Activated naive CD4-positive, alpha-beta T cell treated with anti-CD3 and anti-CD28 coated beads for 36 hours (primary cell): ENCODE measurements at regions of chr10 and their contacts with region 1.

Region 1: GRCh38 chr10:75111367-75111906 is at the start of gene SAMD8:
- DNase-seq: peak; percentile 98
- H3K4me3 Mint-ChIP-seq: peak within 1 kb of the TSS; percentile 95
- H3K27ac Mint-ChIP-seq: peak within 1 kb of the TSS; percentile 97
- H3K4me1 Mint-ChIP-seq: peaks cover 44% of the 10 kb centered on the region
- H3K27me3 Mint-ChIP-seq: no peaks in the 10 kb centered on the region
- total RNA-seq, gene SAMD8: 15.3 to 16.9 TPM

Region 2: DNA sequence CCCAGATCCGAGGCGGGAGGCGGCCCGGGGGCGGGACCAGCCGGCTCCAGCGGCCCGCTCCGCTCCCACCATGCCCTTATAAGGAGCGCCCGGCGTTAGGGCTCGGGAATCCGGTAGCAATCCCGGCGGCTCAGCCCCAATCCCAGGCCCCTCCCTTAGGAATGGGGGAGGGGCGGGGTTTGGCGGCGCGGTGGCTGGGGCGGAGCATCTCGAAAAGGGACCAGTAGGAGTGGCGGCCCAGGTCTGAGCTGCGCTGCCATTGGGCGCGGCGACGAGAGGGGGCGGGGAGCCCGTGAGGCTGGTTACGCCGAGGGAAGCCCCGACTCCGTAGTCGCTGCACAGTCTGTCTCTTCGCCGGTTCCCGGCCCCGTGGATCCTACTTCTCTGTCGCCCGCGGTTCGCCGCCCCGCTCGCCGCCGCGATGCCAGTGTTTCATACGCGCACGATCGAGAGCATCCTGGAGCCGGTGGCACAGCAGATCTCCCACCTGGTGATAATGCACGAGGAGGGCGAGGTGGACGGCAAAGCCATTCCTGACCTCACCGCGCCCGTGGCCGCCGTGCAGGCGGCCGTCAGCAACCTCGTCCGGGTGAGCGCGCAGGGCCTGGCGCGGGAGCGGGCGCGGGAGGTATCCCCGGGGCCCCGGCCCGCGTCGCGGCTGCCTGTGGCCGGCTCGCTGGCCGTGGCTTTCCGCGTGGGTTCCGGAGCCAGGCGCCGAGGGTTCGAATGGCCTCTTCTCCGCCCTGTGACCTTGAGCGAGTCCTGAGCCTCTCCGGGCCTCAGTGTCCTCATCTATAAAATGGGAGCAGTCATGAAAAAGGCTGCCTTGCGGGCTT is 1113.4 kb before region 1 on chr10 and contains the start of gene VCL:
- CTCF ChIA-PET with region 1: no interaction called
- intact Hi-C with region 1: loop called (anchors 5 kb)
- DNase-seq: peak; percentile 96
- H3K4me3 Mint-ChIP-seq: peak within 1 kb of the TSS; percentile 86
- H3K27ac Mint-ChIP-seq: peak within 1 kb of the TSS; percentile 89
- H3K4me1 Mint-ChIP-seq: peaks cover 26% of the 10 kb centered on the region
- H3K27me3 Mint-ChIP-seq: no peaks in the 10 kb centered on the region
- total RNA-seq, gene VCL: 13.4 to 14.4 TPM

Region 3: GRCh38 chr10:74176380-74177139 is 934.9 kb before region 1 on chr10:
- CTCF ChIA-PET with region 1: no interaction called
- intact Hi-C with region 1: loop called (anchors 1 kb)
- DNase-seq: peak; percentile 96
- H3K4me3 Mint-ChIP-seq: peak overlapping the region; percentile 90
- H3K27ac Mint-ChIP-seq: peak overlapping the region; percentile 93
- H3K4me1 Mint-ChIP-seq: peaks cover 32% of the 10 kb centered on the region
- H3K27me3 Mint-ChIP-seq: no peaks in the 10 kb centered on the region

Region 4: DNA sequence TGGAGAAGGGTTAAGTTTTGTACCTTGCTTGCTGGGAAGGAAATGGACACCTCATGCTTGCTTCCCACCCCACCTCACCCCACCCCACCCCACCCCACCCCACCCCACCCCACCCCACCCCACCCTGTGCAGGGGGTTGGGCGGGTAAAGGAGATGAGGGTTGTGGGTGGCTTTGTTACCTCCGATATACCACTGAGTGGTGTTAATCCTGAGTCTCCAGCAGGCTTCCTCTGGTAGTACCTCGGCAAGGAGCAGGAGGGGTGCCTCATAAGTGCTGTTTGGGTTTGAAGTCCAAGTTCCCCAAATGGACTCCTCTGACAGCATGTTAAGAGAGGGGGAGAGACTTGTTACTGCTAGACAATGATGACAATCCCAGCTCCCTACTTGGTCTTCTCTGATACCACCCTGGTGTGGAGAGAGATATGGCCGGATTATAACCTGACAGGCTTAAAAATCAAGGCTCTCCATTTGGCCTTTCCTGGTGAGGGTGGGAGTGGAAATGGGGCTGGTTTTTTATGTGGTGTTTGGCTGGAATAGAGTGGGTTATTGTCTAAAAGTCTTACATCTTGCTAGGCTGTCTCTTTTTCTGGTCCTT is 11.7 kb after region 1 on chr10:
- CTCF ChIA-PET with region 1: no interaction called
- intact Hi-C with region 1: no loop called
- DNase-seq: no peak
- H3K4me3 Mint-ChIP-seq: no peak overlapping the region
- H3K27ac Mint-ChIP-seq: no peak overlapping the region
- H3K4me1 Mint-ChIP-seq: peaks cover 15% of the 10 kb centered on the region
- H3K27me3 Mint-ChIP-seq: no peaks in the 10 kb centered on the region

Region 5: DNA sequence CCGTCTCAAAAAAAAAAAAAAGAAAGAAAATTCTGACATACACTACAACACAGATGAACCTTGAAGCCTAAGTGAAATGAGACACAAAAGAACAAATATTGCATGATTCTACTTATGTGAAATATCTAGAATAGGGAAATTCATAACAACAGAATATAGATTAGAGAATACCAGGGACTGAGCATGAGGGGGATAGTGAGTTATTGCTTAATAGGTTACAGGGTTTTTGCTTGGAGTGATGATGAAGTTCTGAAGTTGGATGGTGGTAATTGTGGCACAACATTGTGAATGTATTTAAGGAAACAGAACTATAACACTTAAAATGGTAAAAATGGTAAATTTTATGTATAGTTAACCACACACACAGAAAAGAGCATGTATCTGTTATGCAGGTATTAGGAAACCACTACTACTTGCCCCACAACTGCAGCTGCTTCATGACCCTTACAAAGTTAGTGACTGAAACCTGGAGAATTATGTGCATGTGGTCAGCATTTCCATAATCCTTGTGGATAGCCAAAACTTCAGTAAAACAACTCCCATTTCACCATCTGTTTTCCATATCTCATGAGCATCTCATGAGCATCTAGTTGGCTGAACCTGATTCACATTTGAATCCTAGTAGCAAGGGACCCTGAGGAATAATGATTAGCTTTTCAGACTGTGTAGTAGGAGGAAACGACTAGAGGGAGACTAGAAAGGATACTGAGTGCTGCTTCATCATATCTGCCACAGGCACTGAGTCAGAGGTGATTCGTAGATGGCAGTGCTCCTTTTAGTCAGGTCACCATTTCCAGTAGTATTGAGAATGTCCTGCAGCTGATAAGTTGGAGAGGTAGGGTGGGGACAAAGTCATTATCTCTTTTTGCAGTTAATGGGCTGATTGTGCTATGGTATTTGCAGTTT is 26.3 kb after region 1 on chr10:
- CTCF ChIA-PET with region 1: no interaction called
- intact Hi-C with region 1: loop called (anchors 1 kb)
- DNase-seq: peak; percentile 62
- H3K4me3 Mint-ChIP-seq: no peak overlapping the region
- H3K27ac Mint-ChIP-seq: peak overlapping the region; percentile 69
- H3K4me1 Mint-ChIP-seq: peaks cover 34% of the 10 kb centered on the region
- H3K27me3 Mint-ChIP-seq: no peaks in the 10 kb centered on the region

Region 6: GRCh38 chr10:75180592-75180991 is 69.2 kb after region 1 on chr10:
- CTCF ChIA-PET with region 1: no interaction called
- intact Hi-C with region 1: loop called (anchors 2 kb)
- DNase-seq: no peak
- H3K4me3 Mint-ChIP-seq: no peak overlapping the region
- H3K27ac Mint-ChIP-seq: no peak overlapping the region
- H3K4me1 Mint-ChIP-seq: peaks cover 22% of the 10 kb centered on the region
- H3K27me3 Mint-ChIP-seq: no peaks in the 10 kb centered on the region

Region 7: DNA sequence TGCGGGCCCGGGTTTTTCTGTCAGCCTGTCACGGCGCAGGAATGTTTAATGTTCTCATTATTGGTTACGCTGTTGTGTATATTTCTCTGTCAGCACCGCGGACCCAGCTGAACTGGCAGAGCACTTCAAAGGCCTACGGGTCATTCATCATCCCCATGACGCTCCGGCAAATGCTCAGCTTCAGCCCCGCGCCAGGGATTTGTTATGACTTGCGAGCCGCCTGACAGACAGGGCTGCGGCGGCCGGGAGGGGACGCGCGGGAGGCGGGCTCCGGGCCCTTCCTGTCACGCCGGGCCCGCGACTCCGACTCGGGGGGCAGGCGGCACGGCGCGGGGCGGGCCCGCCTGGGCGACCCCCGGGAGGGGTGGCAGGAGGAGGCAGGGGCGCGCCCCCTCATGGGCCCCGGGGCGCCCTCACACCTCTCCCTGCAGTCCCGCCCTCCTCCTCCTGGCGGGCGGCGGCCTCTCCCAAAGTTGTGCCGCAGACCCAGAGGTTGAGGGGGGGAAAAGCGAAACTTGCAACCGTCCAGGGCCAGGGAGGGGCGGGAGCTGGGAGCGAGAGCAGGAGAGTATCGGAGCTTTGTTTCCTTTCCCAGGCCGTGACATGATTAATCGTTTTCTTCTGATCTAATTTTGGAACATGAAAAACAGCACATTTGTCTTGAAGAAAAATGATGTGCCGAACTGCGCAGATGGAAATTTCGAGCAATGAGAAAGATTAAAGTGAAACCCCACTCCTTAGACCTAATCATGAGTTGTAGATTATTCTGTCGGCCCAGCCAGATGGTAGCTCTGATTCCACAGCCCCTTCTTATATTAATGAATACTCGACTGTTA is 183.6 kb after region 1 on chr10:
- CTCF ChIA-PET with region 1: no interaction called
- intact Hi-C with region 1: loop called (anchors 5 kb)
- DNase-seq: peak; percentile 93
- H3K4me3 Mint-ChIP-seq: peak overlapping the region; percentile 57
- H3K27ac Mint-ChIP-seq: no peak overlapping the region
- H3K4me1 Mint-ChIP-seq: peaks cover 5% of the 10 kb centered on the region
- H3K27me3 Mint-ChIP-seq: peaks cover 4% of the 10 kb centered on the region

Region 8: GRCh38 chr10:75696536-75696935 is 585.1 kb after region 1 on chr10:
- CTCF ChIA-PET with region 1: no interaction called
- intact Hi-C with region 1: no loop called
- DNase-seq: no peak
- H3K4me3 Mint-ChIP-seq: no peak overlapping the region
- H3K27ac Mint-ChIP-seq: no peak overlapping the region
- H3K4me1 Mint-ChIP-seq: no peaks in the 10 kb centered on the region
- H3K27me3 Mint-ChIP-seq: peaks cover 12% of the 10 kb centered on the region